Caco-2 (cell line): ENCODE measurements at regions of chr20 and their contacts with region 1.

Region 1: GRCh38 chr20:50929299-50930138 is 1.7 kb downstream of the ADNP start:
- DNase-seq: peak; percentile 96 to 98
- H3K4me3 ChIP-seq: peak overlapping the region; percentile 96
- H3K4me3 Mint-ChIP-seq: peak overlapping the region; percentile 90
- H3K27ac Mint-ChIP-seq: peak overlapping the region; percentile 89
- H3K4me1 ChIP-seq: peaks cover 50% of the 10 kb centered on the region
- H3K4me1 Mint-ChIP-seq: peaks cover 56% of the 10 kb centered on the region
- H3K27me3 ChIP-seq: no peaks in the 10 kb centered on the region
- H3K27me3 Mint-ChIP-seq: no peaks in the 10 kb centered on the region
- CTCF ChIP-seq: peak; percentile 99

Region 2: DNA sequence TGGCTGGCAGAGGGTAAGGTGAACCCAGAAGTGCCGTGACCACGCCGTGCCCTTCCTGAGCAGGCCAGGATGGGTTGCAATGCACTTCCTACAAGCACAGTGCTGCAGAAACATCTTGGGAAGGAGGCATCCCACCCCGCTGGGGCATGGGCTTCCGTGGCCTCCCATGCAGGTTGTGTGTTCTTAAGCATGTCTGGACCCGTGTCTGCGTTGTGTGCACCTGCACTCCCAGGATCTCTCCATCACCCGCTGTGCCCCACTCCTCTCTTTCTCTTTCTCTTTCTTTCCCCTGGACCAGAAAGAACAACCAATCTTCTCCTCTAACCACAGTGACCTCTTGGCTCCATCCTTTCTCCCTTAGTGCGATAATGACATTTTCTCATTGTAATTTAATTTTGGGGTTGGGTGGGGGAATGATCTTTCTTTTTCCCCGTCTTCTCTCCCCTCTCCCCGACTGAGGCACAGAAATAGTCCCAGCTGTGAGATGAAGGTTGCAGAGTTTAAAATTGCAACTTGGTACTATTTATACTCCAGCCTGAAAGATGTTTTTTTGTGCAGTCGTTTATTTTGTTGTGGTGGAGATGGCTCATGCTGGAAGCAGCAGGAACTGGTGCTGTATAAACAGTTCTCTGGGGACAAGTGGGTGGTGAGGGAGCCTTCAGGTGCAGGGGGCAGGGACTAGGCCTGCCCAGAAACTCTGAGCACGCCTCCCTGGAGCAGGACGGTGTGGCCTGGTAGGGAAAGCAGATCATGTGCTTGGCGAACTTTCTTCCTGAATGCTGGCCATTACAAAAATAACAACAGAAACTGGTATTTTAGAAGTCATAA is 114.1 kb before region 1 on chr20:
- CTCF ChIA-PET with region 1: interaction called, 3 read pairs
- POLR2A ChIA-PET with region 1: no interaction called
- intact Hi-C with region 1: loop called (anchors 1 kb)
- DNase-seq: no peak
- H3K4me3 ChIP-seq: no peak overlapping the region
- H3K4me3 Mint-ChIP-seq: no peak overlapping the region
- H3K27ac Mint-ChIP-seq: no peak overlapping the region
- H3K4me1 ChIP-seq: peaks cover 5% of the 10 kb centered on the region; the same call in 1 of the 2 replicates
- H3K4me1 Mint-ChIP-seq: peaks cover 15% of the 10 kb centered on the region
- H3K27me3 ChIP-seq: no peaks in the 10 kb centered on the region
- H3K27me3 Mint-ChIP-seq: no peaks in the 10 kb centered on the region
- CTCF ChIP-seq: no peak

Region 3: DNA sequence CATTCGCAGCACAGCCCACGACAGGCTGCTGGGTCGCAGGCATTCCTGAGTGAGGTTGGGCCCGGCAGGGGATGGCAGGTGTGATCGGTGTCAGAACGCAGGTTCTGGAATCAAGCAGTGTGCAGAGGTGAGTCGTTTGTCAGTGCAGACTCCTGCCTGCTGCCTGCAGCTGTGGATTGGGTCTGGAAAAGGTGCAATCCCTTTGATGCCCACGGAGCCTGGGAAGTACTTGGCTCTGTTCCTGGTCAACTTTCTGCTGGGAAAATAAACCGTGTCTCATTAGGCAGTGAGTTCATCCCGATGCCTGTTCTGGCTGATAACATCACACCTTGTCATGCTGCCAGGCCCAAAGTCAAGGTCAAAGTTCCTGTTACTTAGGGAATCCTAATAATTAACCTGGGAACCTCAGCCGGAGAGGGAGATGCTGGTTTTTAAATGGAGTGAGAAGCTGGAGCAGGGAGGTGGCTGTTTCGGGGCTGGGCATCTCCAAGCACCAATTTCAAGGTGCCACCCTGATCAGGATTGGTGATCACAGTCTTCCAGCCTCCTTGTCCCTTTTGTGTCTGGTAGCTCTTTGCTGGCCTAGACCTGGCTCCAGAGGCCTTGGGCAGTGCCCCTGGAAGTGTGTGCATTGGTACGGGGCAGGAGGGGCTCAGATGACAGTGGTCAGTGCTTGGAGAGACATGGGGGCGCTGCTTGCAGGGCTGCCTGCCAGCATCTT is 73.3 kb before region 1 on chr20:
- CTCF ChIA-PET with region 1: interaction called, 3 read pairs
- POLR2A ChIA-PET with region 1: no interaction called
- intact Hi-C with region 1: loop called (anchors 1 kb)
- DNase-seq: peak; percentile 74 to 83
- H3K4me3 ChIP-seq: no peak overlapping the region
- H3K4me3 Mint-ChIP-seq: peak overlapping the region; percentile 0
- H3K27ac Mint-ChIP-seq: peak overlapping the region; percentile 39
- H3K4me1 ChIP-seq: peaks cover 17% of the 10 kb centered on the region
- H3K4me1 Mint-ChIP-seq: peaks cover 18% of the 10 kb centered on the region
- H3K27me3 ChIP-seq: no peaks in the 10 kb centered on the region
- H3K27me3 Mint-ChIP-seq: no peaks in the 10 kb centered on the region
- CTCF ChIP-seq: no peak

Region 4: GRCh38 chr20:50895111-50895830 is 34.2 kb before region 1 on chr20:
- CTCF ChIA-PET with region 1: interaction called, 12 read pairs
- POLR2A ChIA-PET with region 1: interaction called, 10 read pairs
- intact Hi-C with region 1: loop called (anchors 1 kb)
- DNase-seq: peak in 1 of 2 experiments; percentile 73
- H3K4me3 ChIP-seq: no peak overlapping the region
- H3K4me3 Mint-ChIP-seq: no peak overlapping the region
- H3K27ac Mint-ChIP-seq: no peak overlapping the region
- H3K4me1 ChIP-seq: peaks cover 15% of the 10 kb centered on the region
- H3K4me1 Mint-ChIP-seq: peaks cover 14% of the 10 kb centered on the region
- H3K27me3 ChIP-seq: no peaks in the 10 kb centered on the region
- H3K27me3 Mint-ChIP-seq: no peaks in the 10 kb centered on the region
- CTCF ChIP-seq: no peak

Region 5: DNA sequence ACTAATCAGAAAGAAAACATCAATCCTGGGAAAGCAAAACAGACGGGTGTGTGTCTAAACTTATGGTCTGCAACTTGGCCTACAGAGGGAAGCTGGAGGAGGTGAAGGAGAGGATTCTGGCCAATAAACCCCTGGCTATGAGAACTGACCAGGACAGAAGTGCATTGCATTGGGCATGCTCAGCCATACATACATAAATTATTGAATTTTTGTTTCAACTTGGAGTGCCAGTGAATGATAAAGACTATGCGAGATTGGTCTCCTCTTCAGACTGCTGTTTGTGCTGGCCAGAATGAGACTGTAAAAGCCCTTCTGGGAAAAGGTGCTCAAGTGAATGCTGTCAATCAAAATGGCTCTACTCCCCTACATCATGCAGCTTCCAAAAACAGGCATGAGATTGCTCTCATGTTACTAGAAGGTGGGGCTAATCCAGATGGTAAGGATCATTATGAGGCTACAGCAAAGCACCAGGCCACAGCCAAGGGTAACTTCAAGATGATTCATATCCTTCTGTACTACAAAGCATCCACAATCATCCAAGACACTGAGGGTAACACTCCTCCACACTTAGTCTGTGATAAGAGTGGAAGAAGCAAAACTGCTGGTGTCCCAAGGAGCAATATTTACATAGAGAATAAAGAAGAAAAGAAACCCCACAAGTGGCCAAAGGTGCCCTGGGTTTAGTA is 15.7 kb before region 1 on chr20:
- CTCF ChIA-PET with region 1: interaction called, 20 read pairs
- POLR2A ChIA-PET with region 1: interaction called, 23 read pairs
- intact Hi-C with region 1: loop called (anchors 1 kb)
- DNase-seq: no peak
- H3K4me3 ChIP-seq: no peak overlapping the region
- H3K4me3 Mint-ChIP-seq: no peak overlapping the region
- H3K27ac Mint-ChIP-seq: peak overlapping the region; percentile 75
- H3K4me1 ChIP-seq: peaks cover 64% of the 10 kb centered on the region
- H3K4me1 Mint-ChIP-seq: peaks cover 82% of the 10 kb centered on the region
- H3K27me3 ChIP-seq: no peaks in the 10 kb centered on the region
- H3K27me3 Mint-ChIP-seq: no peaks in the 10 kb centered on the region
- CTCF ChIP-seq: no peak

Region 6: DNA sequence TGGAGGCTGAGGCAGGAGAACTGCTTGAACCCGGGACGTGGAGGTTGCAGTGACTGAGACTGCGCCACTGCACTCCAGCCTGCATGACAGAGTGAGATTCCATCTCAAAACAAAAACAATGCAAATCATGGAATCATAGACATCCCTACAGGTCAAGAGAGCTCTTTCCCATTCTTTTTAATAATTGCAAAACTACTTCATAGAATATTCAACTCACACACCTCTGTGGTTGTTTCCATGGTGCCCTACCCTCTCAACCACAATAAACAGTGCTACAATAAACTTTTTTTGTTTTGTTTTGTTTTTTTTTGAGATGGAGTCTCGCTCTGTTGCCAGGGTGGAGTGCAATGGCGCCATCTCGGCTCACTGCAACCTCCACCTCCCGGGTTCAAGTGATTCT is 13.6 kb after region 1 on chr20:
- CTCF ChIA-PET with region 1: interaction called, 10 read pairs
- POLR2A ChIA-PET with region 1: interaction called, 7 read pairs
- intact Hi-C with region 1: no loop called
- DNase-seq: no peak
- H3K4me3 ChIP-seq: no peak overlapping the region
- H3K4me3 Mint-ChIP-seq: no peak overlapping the region
- H3K27ac Mint-ChIP-seq: no peak overlapping the region
- H3K4me1 ChIP-seq: no peaks in the 10 kb centered on the region
- H3K4me1 Mint-ChIP-seq: no peaks in the 10 kb centered on the region
- H3K27me3 ChIP-seq: no peaks in the 10 kb centered on the region
- H3K27me3 Mint-ChIP-seq: no peaks in the 10 kb centered on the region
- CTCF ChIP-seq: no peak

Region 7: GRCh38 chr20:50958615-50959542 is 29.4 kb after region 1 on chr20 and contains the start of gene MOCS3:
- CTCF ChIA-PET with region 1: interaction called, 42 read pairs
- POLR2A ChIA-PET with region 1: interaction called, 105 read pairs
- intact Hi-C with region 1: loop called (anchors 1 kb)
- DNase-seq: peak; percentile 94 to 96
- H3K4me3 ChIP-seq: peak within 1 kb of the TSS; percentile 91
- H3K4me3 Mint-ChIP-seq: peak within 1 kb of the TSS; percentile 92
- H3K27ac Mint-ChIP-seq: peak within 1 kb of the TSS; percentile 97
- H3K4me1 ChIP-seq: peaks cover 16% of the 10 kb centered on the region
- H3K4me1 Mint-ChIP-seq: peaks cover 22% of the 10 kb centered on the region
- H3K27me3 ChIP-seq: no peaks in the 10 kb centered on the region
- H3K27me3 Mint-ChIP-seq: no peaks in the 10 kb centered on the region
- CTCF ChIP-seq: peak in 1 of 2 experiments; percentile 37
- total RNA-seq, gene MOCS3: 12.9 and 13.2 TPM in 2 replicates

Region 8: DNA sequence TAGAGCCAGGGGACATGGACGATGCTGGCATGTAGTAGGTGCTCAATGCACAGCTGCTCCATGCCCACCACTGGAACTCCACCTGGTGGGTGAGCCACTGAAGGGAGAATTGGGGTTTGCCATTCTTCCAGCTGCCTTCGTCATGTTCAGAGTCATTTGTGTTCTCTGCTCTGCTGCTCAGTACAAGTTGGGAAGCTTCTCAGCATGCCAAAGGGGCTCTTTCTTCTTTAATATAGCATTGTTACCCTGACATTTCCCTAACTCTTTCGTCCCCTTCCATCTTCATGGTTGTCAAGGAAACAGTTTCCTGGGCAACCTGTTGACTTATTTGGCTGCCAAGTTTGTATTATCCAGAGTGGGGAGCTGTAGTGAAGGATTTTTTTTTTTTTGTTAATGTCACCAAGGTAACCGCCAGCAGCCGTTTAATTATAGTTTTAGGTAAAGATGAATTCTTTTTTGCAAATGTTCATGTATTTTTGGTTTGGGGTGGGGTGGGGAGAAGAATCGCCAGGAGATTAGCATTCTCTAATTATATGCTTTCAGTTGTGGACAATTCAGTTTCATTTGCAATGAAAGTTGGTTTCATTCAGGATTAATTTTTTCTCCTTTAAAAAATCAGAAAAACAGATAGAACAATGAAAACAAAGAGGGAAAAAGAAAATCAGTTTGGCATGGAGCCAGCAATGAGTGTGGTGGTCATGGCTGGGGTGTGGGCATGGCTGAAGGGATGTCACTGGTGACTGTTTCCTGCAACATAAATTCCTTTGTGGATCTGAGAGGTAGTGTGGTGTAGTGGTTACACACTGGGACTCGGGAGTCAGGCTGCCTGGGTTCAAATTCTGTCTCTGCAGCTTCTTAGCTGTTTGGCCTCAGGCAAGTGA is 166.4 kb after region 1 on chr20:
- CTCF ChIA-PET with region 1: no interaction called
- POLR2A ChIA-PET with region 1: no interaction called
- intact Hi-C with region 1: no loop called
- DNase-seq: no peak
- H3K4me3 ChIP-seq: no peak overlapping the region
- H3K4me3 Mint-ChIP-seq: no peak overlapping the region
- H3K27ac Mint-ChIP-seq: no peak overlapping the region
- H3K4me1 ChIP-seq: peaks cover 21% of the 10 kb centered on the region
- H3K4me1 Mint-ChIP-seq: no peaks in the 10 kb centered on the region
- H3K27me3 ChIP-seq: peaks cover under 1% of the 10 kb centered on the region; the same call in 1 of the 2 replicates
- H3K27me3 Mint-ChIP-seq: peaks cover 17% of the 10 kb centered on the region
- CTCF ChIP-seq: no peak